CD8-positive, alpha-beta T cell (primary cell): ENCODE measurements at regions of chr19 and their contacts with region 1.

Region 1: DNA sequence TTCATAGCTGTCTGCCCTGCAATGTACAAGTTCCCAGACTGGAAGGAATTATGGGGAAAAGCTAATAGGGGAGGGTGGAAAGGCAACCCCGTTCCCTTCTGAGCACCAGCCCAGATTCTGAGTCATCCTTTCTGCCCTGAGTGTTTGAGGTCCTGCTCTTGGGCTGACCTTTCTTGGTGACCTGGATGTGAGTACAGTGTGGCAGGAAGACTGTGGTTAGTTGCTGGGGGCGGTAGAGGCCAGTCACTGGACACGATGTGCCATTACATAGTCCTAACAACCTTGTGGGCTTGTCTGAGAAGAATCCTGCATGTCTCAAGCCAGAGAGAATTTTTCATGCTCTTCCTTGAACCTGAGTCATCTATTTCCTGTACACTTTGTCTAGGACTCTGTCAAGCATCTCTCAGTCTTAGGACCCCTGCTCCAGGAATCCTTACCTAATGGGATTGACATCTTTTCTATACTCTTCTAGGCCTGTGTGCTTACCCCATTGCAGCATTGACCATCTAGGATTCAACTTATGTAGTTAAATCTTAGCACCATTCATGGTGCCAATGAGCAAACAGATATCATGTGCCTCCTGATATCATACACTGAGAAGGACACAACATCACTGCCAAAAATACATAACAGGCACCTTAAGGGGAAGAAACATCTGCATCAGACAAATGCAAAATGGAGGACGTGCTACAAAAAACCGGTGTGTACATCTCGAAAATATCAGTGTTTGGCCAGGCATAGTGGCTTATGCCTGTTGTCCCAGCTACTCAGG is 8.1 kb upstream of the ANGPTL4 start:
- DNase-seq: no peak
- ATAC-seq: no peak
- H3K4me3 ChIP-seq: no peak overlapping the region
- H3K4me3 Mint-ChIP-seq: no peak overlapping the region
- H3K27ac ChIP-seq: no peak overlapping the region
- H3K27ac Mint-ChIP-seq: no peak overlapping the region
- H3K4me1 ChIP-seq: peaks cover 7% of the 10 kb centered on the region
- H3K4me1 Mint-ChIP-seq: no peaks in the 10 kb centered on the region
- H3K27me3 ChIP-seq: peaks cover 0 to 21% of the 10 kb centered on the region in 2 experiments
- H3K27me3 Mint-ChIP-seq: peaks cover 13% of the 10 kb centered on the region
- CTCF ChIP-seq: no peak

Region 2: DNA sequence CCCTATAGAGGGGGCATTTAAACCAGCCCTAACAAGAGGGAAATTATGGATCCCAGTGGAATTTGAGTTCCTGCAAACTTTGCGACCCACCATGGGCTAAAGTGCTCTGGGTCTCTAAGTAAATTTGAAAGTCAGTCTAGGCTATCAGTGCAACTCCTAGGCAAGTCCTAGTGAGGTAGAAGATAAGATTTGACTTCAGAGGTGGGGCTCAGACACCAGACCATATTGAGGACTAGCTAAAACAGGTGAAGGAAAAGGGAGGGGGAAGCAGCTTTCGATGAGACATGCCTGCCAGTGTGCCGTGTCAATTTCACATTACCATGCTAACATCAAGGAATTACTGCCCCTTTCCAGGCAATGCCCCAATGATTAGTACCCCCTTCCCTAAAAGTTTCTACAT is 86.1 kb before region 1 on chr19:
- CTCF ChIA-PET with region 1: interaction called, 16 read pairs
- POLR2A ChIA-PET with region 1: no interaction called
- intact Hi-C with region 1: no loop called
- DNase-seq: peak in 1 of 9 experiments; percentile 39
- ATAC-seq: no peak
- H3K4me3 ChIP-seq: peak overlapping the region; percentile 69 to 90
- H3K4me3 Mint-ChIP-seq: peak overlapping the region; percentile 95
- H3K27ac ChIP-seq: peak overlapping the region; percentile 77 to 81
- H3K27ac Mint-ChIP-seq: peak overlapping the region; percentile 96
- H3K4me1 ChIP-seq: peaks cover 10% of the 10 kb centered on the region
- H3K4me1 Mint-ChIP-seq: peaks cover 16% of the 10 kb centered on the region
- H3K27me3 ChIP-seq: no peaks in the 10 kb centered on the region
- H3K27me3 Mint-ChIP-seq: no peaks in the 10 kb centered on the region
- CTCF ChIP-seq: no peak

Region 3: GRCh38 chr19:8377598-8377997 is 21.8 kb after region 1 on chr19:
- CTCF ChIA-PET with region 1: interaction called, 16 read pairs
- POLR2A ChIA-PET with region 1: interaction called, 3 read pairs
- intact Hi-C with region 1: no loop called
- DNase-seq: no peak
- ATAC-seq: no peak
- H3K4me3 ChIP-seq: no peak overlapping the region
- H3K4me3 Mint-ChIP-seq: no peak overlapping the region
- H3K27ac ChIP-seq: no peak overlapping the region
- H3K27ac Mint-ChIP-seq: no peak overlapping the region
- H3K4me1 ChIP-seq: peaks cover 6% of the 10 kb centered on the region
- H3K4me1 Mint-ChIP-seq: peaks cover 3% of the 10 kb centered on the region
- H3K27me3 ChIP-seq: no peaks in the 10 kb centered on the region
- H3K27me3 Mint-ChIP-seq: no peaks in the 10 kb centered on the region
- CTCF ChIP-seq: no peak

Region 4: DNA sequence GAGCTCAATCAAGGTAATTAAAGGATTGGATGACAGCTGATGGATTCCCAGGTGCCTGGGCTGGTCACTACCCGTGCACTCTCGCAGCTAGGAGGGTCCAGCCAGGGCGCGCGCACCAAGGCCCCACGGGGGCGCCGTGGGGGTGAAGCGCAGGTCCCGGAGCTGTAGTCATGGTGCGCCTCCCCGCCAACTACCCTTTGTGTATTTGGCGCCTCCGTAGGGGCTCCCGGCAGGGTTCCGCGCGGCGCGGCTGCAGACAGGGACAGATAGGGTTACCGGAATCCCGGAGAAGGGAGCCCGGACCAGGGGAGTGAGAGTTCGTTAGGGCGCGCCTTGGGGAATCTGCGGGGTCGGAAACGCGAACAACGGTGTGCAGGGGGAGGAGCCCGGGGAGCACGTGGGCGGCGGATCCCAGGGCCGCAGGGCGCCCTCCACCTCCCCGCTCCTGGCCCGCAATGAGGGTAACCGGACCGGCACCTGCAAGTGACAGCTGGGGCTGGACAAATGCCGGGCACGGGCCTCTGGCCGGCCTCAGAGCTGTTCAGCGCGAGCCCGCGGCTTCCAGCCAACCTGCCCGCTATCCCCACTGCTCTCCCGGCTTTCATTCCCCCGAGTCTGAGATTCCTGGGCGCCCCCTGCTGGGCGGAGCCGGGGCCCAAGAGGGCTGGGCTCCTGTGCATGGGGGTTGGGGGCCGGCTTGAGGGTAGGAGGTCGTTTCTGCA is 150.0 kb after region 1 on chr19:
- CTCF ChIA-PET with region 1: interaction called, 13 read pairs
- POLR2A ChIA-PET with region 1: no interaction called
- intact Hi-C with region 1: no loop called
- DNase-seq: peak in 8 of 9 experiments; percentile 54 to 85 (median 70)
- ATAC-seq: peak; percentile 78
- H3K4me3 ChIP-seq: peak overlapping the region; percentile 58 to 83
- H3K4me3 Mint-ChIP-seq: peak overlapping the region; percentile 91
- H3K27ac ChIP-seq: peak overlapping the region; percentile 32 to 43
- H3K27ac Mint-ChIP-seq: peak overlapping the region; percentile 87
- H3K4me1 ChIP-seq: peaks cover 19% of the 10 kb centered on the region
- H3K4me1 Mint-ChIP-seq: peaks cover 19% of the 10 kb centered on the region
- H3K27me3 ChIP-seq: no peaks in the 10 kb centered on the region
- H3K27me3 Mint-ChIP-seq: no peaks in the 10 kb centered on the region
- CTCF ChIP-seq: peak; percentile 45

Region 5: GRCh38 chr19:8592231-8593009 is 236.6 kb after region 1 on chr19:
- CTCF ChIA-PET with region 1: no interaction called
- POLR2A ChIA-PET with region 1: no interaction called
- intact Hi-C with region 1: no loop called
- DNase-seq: peak; percentile 91 to 98 (median 95)
- ATAC-seq: peak; percentile 86
- H3K4me3 ChIP-seq: peak overlapping the region; percentile 47 to 50
- H3K4me3 Mint-ChIP-seq: peak overlapping the region; percentile 84
- H3K27ac ChIP-seq: peak overlapping the region in 1 of 2 experiments; percentile 32
- H3K27ac Mint-ChIP-seq: peak overlapping the region; percentile 84
- H3K4me1 ChIP-seq: peaks cover 21% of the 10 kb centered on the region
- H3K4me1 Mint-ChIP-seq: peaks cover 36% of the 10 kb centered on the region
- H3K27me3 ChIP-seq: no peaks in the 10 kb centered on the region
- H3K27me3 Mint-ChIP-seq: no peaks in the 10 kb centered on the region
- CTCF ChIP-seq: no peak

Region 6: GRCh38 chr19:8641908-8642547 is 286.2 kb after region 1 on chr19:
- CTCF ChIA-PET with region 1: interaction called, 20 read pairs
- POLR2A ChIA-PET with region 1: no interaction called
- intact Hi-C with region 1: loop called in 1 of 2 experiments (anchors 5 kb)
- DNase-seq: peak in 3 of 9 experiments; percentile 23 to 76 (median 67)
- ATAC-seq: peak; percentile 74
- H3K4me3 ChIP-seq: no peak overlapping the region
- H3K4me3 Mint-ChIP-seq: no peak overlapping the region
- H3K27ac ChIP-seq: no peak overlapping the region
- H3K27ac Mint-ChIP-seq: no peak overlapping the region
- H3K4me1 ChIP-seq: peaks cover 7% of the 10 kb centered on the region
- H3K4me1 Mint-ChIP-seq: peaks cover 11% of the 10 kb centered on the region
- H3K27me3 ChIP-seq: peaks cover 0 to 4% of the 10 kb centered on the region in 2 experiments
- H3K27me3 Mint-ChIP-seq: peaks cover 26% of the 10 kb centered on the region
- CTCF ChIP-seq: peak; percentile 63